ENCODE measurements at regions of chr17 and their contacts with region 1.

Region 1: GRCh38 chr17:42577532-42578281 is at the start of gene PSMC3IP:
- DNase-seq: peak; percentile 95
- H3K4me3 Mint-ChIP-seq: peak within 1 kb of the TSS; percentile 96
- H3K27ac Mint-ChIP-seq: peak within 1 kb of the TSS; percentile 88
- H3K4me1 Mint-ChIP-seq: peaks cover 48% of the 10 kb centered on the region
- H3K27me3 Mint-ChIP-seq: no peaks in the 10 kb centered on the region
- total RNA-seq, gene PSMC3IP: 14.7 to 16.1 TPM

Region 2: GRCh38 chr17:42392664-42393415 is 184.9 kb before region 1 on chr17:
- CTCF ChIA-PET with region 1: no interaction called
- POLR2A ChIA-PET with region 1: no interaction called
- DNase-seq: no peak
- H3K4me3 Mint-ChIP-seq: no peak overlapping the region
- H3K27ac Mint-ChIP-seq: no peak overlapping the region
- H3K4me1 Mint-ChIP-seq: peaks cover 30% of the 10 kb centered on the region
- H3K27me3 Mint-ChIP-seq: no peaks in the 10 kb centered on the region

Region 3: GRCh38 chr17:42536048-42536371 is 41.7 kb before region 1 on chr17 and contains the start of gene NAGLU:
- CTCF ChIA-PET with region 1: interaction called, 9 read pairs
- POLR2A ChIA-PET with region 1: interaction called, 21 read pairs
- DNase-seq: peak; percentile 89
- H3K4me3 Mint-ChIP-seq: peak within 1 kb of the TSS; percentile 82
- H3K27ac Mint-ChIP-seq: peak within 1 kb of the TSS; percentile 75
- H3K4me1 Mint-ChIP-seq: peaks cover 42% of the 10 kb centered on the region
- H3K27me3 Mint-ChIP-seq: peaks cover 12% of the 10 kb centered on the region
- total RNA-seq, gene NAGLU: 15.9 to 17.5 TPM

Region 4: GRCh38 chr17:42554250-42555121 is 23.2 kb before region 1 on chr17:
- CTCF ChIA-PET with region 1: interaction called, 12 read pairs
- POLR2A ChIA-PET with region 1: interaction called, 14 read pairs
- DNase-seq: peak; percentile 82
- H3K4me3 Mint-ChIP-seq: peak overlapping the region; percentile 91
- H3K27ac Mint-ChIP-seq: peak overlapping the region; percentile 87
- H3K4me1 Mint-ChIP-seq: peaks cover 22% of the 10 kb centered on the region
- H3K27me3 Mint-ChIP-seq: no peaks in the 10 kb centered on the region

Region 5: DNA sequence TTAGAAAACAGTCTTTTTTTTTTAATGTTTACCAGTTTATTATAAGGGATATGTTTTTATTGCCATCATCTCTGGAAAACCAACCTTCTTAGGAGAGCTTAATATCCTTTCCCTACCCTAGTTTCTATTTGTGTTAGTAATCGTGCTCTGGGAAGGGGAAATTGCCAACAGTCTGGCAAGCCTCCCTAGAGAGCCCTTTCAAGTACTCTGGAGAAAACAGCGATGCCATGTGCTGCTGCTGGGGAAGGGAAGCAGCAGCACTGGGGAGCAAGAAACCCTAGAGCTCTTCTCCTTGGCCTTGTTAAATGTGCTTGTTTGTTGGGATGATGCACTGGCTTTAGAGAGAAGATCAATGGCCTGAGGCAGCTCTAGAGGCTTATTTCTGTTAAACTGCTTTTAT is 21.2 kb after region 1 on chr17:
- CTCF ChIA-PET with region 1: interaction called, 12 read pairs
- POLR2A ChIA-PET with region 1: interaction called, 6 read pairs
- DNase-seq: no peak
- H3K4me3 Mint-ChIP-seq: no peak overlapping the region
- H3K27ac Mint-ChIP-seq: no peak overlapping the region
- H3K4me1 Mint-ChIP-seq: peaks cover 10% of the 10 kb centered on the region
- H3K27me3 Mint-ChIP-seq: no peaks in the 10 kb centered on the region

Region 6: GRCh38 chr17:42629411-42630009 is 51.8 kb after region 1 on chr17:
- CTCF ChIA-PET with region 1: no interaction called
- POLR2A ChIA-PET with region 1: no interaction called
- DNase-seq: no peak
- H3K4me3 Mint-ChIP-seq: no peak overlapping the region
- H3K27ac Mint-ChIP-seq: no peak overlapping the region
- H3K4me1 Mint-ChIP-seq: peaks cover 2% of the 10 kb centered on the region
- H3K27me3 Mint-ChIP-seq: no peaks in the 10 kb centered on the region

Region 7: DNA sequence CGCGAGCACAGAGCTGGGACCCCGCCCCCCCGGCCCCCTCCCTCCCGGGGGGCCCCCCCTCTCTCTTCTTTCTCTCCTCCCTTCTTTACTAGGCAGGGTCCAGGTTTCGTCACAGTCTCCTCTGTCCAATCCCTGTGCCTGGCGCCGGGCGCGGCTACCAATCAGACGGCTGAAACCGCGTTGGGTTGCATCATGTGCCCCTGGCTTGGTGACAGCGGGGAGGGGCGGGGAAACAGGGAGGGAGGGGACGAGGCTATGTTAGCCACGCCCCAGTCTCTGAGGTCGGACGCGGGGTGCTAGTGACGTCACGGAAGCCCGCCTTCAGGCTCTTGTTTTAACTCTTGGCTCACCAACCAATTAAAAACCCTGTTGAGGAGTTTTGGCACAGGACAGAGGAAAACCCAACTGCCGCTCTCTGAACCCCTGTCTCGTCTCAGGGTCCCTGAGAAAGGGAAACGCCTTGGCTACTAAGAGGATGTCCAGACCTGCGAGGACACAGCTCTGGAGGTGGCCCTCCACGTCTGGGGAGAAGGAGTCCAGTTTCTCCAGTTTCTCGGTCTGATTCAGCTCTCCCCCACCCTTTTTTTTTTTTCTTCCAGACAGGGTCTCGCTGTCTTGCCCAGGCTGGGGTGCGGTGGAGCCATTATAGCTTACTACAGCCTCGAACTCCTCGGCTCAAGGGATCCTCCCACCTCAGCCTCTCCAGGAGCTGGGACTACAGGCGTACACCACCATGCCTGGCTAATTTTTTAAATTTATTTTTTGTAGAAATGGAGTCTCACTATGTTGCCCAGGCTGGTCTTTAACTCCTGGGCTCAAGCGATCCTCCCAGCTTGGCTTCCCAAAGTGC is 99.5 kb after region 1 on chr17:
- CTCF ChIA-PET with region 1: interaction called, 62 read pairs
- POLR2A ChIA-PET with region 1: interaction called, 28 read pairs
- DNase-seq: peak; percentile 100
- H3K4me3 Mint-ChIP-seq: peak overlapping the region; percentile 77
- H3K27ac Mint-ChIP-seq: peak overlapping the region; percentile 77
- H3K4me1 Mint-ChIP-seq: peaks cover 50% of the 10 kb centered on the region
- H3K27me3 Mint-ChIP-seq: peaks cover 47% of the 10 kb centered on the region

Region 8: DNA sequence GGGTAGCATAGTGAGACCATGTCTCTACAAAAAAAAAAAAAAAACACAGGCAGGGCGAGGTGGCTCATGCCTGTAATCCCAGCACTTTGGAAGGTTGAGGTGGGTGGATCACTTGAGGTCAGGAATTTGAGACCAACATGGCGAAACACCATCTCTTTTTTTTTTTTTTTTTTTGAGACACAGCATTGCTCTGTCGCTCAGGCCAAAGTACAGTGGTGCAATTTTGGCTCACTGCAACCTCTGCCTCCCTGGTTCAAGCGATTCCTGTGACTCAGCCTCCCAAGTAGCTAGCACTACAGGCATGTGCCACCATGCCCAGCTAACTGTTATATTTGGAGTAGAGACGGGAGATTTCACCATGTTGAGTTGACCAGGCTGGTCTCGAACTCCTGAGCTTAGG is 188.4 kb after region 1 on chr17:
- CTCF ChIA-PET with region 1: interaction called, 93 read pairs
- POLR2A ChIA-PET with region 1: interaction called, 7 read pairs
- DNase-seq: no peak
- H3K4me3 Mint-ChIP-seq: no peak overlapping the region
- H3K27ac Mint-ChIP-seq: no peak overlapping the region
- H3K4me1 Mint-ChIP-seq: peaks cover 4% of the 10 kb centered on the region
- H3K27me3 Mint-ChIP-seq: peaks cover 42% of the 10 kb centered on the region

Region 9: GRCh38 chr17:42819944-42820535 is 242.3 kb after region 1 on chr17:
- CTCF ChIA-PET with region 1: interaction called, 21 read pairs
- POLR2A ChIA-PET with region 1: interaction called, 19 read pairs
- DNase-seq: peak; percentile 74
- H3K4me3 Mint-ChIP-seq: no peak overlapping the region
- H3K27ac Mint-ChIP-seq: no peak overlapping the region
- H3K4me1 Mint-ChIP-seq: peaks cover 36% of the 10 kb centered on the region
- H3K27me3 Mint-ChIP-seq: no peaks in the 10 kb centered on the region